ENCODE measurements at regions of chr11 and their contacts with region 1.

Region 1: GRCh38 chr11:113465786-113466185 is 9.4 kb downstream of the DRD2 start:
- DNase-seq: no peak
- H3K4me3 ChIP-seq: no peak overlapping the region
- H3K27ac ChIP-seq: no peak overlapping the region
- H3K27me3 ChIP-seq: peaks cover 0 to 37% (median 10%) of the 10 kb centered on the region in 45 donors
- CTCF ChIP-seq: no peak

Region 2: GRCh38 chr11:113345978-113346377 is 119.8 kb before region 1 on chr11:
- intact Hi-C with region 1: no loop called
- DNase-seq: no peak
- H3K4me3 ChIP-seq: no peak overlapping the region
- H3K27ac ChIP-seq: no peak overlapping the region
- H3K27me3 ChIP-seq: no peaks in the 10 kb centered on the region
- CTCF ChIP-seq: no peak

Region 3: GRCh38 chr11:113481672-113482071 is 15.9 kb after region 1 on chr11:
- intact Hi-C with region 1: loop called in 1 of 2 experiments (anchors 1 kb)
- DNase-seq: peak in 1 of 10 donors; percentile 15
- H3K4me3 ChIP-seq: no peak overlapping the region
- H3K27ac ChIP-seq: no peak overlapping the region
- H3K27me3 ChIP-seq: peaks cover 0 to 23% (median 2%) of the 10 kb centered on the region in 45 donors
- CTCF ChIP-seq: no peak

Region 4: DNA sequence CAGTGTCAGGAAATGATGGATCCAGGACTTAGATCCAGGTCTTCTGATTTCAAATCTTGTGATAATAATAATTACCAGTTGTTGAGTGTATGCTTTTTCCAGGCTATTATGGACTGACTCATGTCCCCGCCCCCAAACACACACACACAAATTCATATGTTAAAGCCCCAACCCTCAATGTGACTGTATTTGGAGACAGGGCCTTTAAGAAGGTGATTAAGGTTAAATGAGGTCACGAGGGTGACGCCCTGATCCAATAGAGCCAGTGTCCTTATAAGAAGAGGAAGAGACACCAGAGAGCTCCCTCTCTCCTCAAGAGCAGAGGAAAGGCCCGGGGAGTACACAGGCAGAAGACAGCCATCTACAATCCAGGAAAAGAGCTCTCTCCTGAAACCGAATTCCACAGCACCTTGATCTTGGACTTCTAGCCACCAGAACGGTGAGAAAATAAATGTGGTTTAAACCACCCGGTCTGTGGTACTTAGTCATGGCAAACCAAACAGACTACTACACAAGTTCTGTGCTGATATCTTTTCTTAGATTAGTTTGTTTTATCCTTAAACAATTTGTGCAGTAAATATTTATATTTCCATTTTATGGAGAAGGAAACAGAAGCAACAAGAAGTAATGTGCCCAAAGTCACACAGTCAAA is 232.1 kb after region 1 on chr11:
- intact Hi-C with region 1: no loop called
- DNase-seq: no peak
- H3K4me3 ChIP-seq: no peak overlapping the region
- H3K27ac ChIP-seq: no peak overlapping the region
- H3K27me3 ChIP-seq: no peaks in the 10 kb centered on the region
- CTCF ChIP-seq: no peak

Region 5: GRCh38 chr11:114001416-114001815 is 535.6 kb after region 1 on chr11:
- intact Hi-C with region 1: no loop called
- DNase-seq: peak in 1 of 10 donors; percentile 23
- H3K4me3 ChIP-seq: no peak overlapping the region
- H3K27ac ChIP-seq: no peak overlapping the region
- H3K27me3 ChIP-seq: peaks cover 0 to 4% (median 0%) of the 10 kb centered on the region in 45 donors
- CTCF ChIP-seq: no peak

Measured in dorsolateral prefrontal cortex (tissue), 120 donors.